AG04449 (cell line): ENCODE measurements at regions of chr3 and their contacts with region 1.

Region 1: DNA sequence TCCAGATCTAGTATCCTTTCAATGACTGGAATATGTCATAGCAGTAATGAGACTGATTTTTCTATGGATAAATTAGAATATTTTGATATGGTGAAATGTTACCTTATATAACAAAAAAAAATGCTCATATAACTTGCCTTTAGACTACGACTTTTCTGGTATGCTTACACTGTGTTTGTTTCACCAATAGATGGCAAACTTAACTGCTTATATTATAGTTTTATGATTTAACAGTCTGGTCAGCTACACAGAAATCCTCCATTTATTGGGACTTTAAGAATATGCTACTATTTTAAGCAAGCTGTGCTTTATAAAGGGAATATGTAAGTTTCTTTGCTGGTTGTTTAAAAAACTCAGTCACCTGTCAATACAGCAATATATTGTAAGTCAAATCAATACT is 205.6 kb downstream of the VGLL3 start:
- DNase-seq: no peak
- H3K4me3 ChIP-seq: no peak overlapping the region
- CTCF ChIP-seq: peak; percentile 44

Region 2: DNA sequence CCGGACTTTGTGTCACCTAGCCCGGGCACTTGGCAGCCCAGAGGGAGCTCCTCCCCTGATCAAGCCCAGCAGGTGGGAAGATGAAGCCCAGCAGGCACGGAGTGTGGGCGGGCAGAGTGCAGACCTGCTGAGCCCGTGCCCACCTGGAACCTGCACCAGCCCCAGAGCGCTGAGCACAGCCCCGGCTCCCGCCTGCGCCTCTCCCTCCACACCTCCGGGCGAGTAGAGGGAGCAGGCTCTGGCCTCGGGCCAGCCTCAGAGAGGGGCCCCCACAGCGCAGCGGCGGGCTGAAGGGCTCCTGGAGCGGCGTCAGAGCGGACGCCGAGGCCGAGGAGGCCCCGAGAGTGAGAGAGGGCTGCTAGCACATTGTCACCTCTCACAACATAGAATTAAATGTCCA is 52.1 kb before region 1 on chr3:
- CTCF ChIA-PET with region 1: no interaction called
- POLR2A ChIA-PET with region 1: no interaction called
- DNase-seq: no peak
- H3K4me3 ChIP-seq: no peak overlapping the region
- CTCF ChIP-seq: no peak

Region 3: GRCh38 chr3:86774082-86774691 is 11.2 kb before region 1 on chr3:
- CTCF ChIA-PET with region 1: interaction called, 23 read pairs
- POLR2A ChIA-PET with region 1: no interaction called
- DNase-seq: no peak
- H3K4me3 ChIP-seq: no peak overlapping the region
- CTCF ChIP-seq: peak; percentile 21

Region 4: GRCh38 chr3:86958534-86958933 is 173.1 kb after region 1 on chr3:
- CTCF ChIA-PET with region 1: interaction called, 18 read pairs
- POLR2A ChIA-PET with region 1: no interaction called
- DNase-seq: peak; percentile 79
- H3K4me3 ChIP-seq: no peak overlapping the region
- CTCF ChIP-seq: no peak

Region 5: DNA sequence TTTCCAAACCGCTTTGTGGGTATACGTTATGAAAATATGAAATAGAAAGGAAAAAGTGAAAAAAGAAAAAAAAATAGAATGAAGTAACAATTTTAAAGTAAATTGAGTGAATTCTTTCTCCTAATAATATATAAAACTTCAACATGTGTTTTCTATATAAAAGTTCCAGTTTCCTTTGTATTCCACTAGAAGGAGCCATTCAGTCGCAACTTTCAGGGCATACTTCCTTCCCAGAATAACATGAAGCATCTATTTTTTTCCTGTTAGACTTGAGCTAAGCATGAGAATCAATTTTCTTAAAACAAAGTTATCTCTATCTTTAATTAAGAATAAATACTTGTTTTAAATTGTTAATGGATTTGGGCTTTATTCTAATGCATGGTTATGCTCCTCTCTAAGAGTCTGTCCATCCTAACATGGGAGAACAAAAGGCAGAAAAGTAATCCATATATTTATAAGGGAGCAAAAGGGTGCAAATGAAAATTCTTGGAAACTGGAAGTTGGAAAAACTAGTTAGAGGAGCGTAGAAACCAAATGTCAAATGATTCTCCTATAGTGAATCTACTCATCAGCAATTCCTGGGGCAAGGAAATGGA is 221.6 kb after region 1 on chr3:
- CTCF ChIA-PET with region 1: interaction called, 10 read pairs
- POLR2A ChIA-PET with region 1: no interaction called
- DNase-seq: no peak
- H3K4me3 ChIP-seq: no peak overlapping the region
- CTCF ChIP-seq: peak; percentile 29

Region 6: DNA sequence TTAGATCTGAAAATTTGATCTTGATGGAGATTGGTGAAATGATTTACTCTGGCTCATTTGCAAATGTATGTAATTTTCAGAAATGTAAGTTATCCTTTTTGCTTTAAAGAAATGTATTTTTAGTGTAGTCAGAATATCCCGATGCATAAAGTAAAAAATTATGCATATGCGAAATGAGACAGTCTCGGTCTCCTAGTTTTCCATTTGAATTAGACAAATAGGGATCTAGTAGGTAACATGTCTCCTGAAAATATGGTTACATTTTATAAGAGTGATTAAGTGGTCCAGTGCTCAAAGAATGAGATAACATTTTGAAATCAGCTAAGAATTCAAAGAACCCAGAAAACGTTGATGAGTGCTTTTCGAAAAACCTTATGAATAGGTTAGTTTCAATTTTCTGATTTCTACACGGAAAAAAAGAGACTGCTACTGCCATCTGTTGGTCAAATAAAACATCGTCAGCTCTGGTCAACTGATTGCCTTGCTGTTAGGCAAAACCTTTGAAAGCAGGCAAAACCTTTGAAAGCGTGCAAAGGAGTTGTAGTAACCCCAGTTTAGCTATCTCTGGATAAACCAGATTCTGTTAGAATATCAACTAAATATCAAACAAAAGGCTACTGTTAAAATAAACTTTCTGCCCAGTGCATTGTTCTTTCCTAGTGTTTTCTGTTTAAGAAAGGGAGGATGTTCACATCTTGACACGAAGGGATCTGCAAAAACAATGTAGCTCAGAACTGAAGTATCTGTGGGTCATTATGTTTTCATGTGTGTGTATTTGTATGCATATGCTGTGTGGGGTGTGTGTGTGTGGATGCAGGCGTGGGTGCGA is 382.5 kb after region 1 on chr3:
- CTCF ChIA-PET with region 1: interaction called, 16 read pairs
- POLR2A ChIA-PET with region 1: no interaction called
- DNase-seq: no peak
- H3K4me3 ChIP-seq: peak overlapping the region; percentile 37
- CTCF ChIP-seq: peak; percentile 52